PC-9 (cell line): ENCODE measurements at regions of chr17 and their contacts with region 1.

Region 1: DNA sequence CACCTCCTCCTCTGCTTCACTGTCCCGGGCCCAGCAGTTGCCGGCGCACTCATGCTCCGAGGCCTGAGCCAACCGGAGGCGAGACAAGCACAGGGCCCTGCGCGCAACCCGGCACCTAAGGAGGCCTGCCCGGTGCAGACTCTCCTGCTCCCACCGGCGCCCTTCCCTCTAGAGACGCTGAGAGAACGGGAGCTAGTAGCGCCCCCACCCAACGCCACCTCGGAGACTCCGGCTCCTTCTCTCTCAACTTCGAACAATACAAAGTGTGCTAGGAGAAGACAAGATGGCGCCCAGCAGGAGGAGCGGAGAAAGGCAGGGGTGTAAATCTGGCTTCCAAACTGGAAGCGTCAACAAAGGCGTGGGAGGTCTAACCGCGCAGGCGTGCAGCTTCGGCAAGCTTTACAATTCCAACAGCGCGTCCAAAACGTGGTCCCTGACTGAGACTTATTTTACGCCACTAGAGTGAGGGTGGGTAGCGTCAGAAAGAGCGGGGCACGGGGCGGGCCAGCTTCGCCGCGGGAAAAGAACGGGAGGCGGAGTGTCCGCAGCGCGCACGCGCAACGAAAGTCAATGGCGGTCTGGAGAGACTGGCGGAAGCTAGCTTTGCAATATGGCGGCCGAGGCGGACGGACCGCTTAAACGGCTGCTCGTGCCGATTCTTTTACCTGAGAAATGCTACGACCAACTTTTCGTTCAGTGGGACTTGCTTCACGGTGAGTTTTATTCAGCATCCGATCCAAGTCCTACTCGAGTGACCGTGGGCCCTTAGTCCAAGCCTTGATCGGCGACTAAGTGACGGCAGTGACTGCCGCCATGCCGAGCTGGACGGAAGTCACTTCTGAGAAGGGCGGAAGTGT is at the start of gene MPDU1:
- DNase-seq: peak; percentile 72 to 97
- H3K4me3 ChIP-seq: peak within 1 kb of the TSS; percentile 65
- H3K27ac ChIP-seq: peak within 1 kb of the TSS; percentile 87
- H3K4me1 ChIP-seq: peaks cover 41% of the 10 kb centered on the region
- H3K27me3 ChIP-seq: no peaks in the 10 kb centered on the region
- CTCF ChIP-seq: no peak
- total RNA-seq, gene MPDU1: 33.4 and 44.2 TPM in 2 replicates

Region 2: GRCh38 chr17:7572588-7573323 is 10.7 kb before region 1 on chr17:
- CTCF ChIA-PET with region 1: interaction called, 6 read pairs
- POLR2A ChIA-PET with region 1: interaction called, 10 read pairs
- intact Hi-C with region 1: loop called (anchors 2 kb)
- DNase-seq: peak; percentile 96 to 100
- H3K4me3 ChIP-seq: peak overlapping the region; percentile 91
- H3K27ac ChIP-seq: peak overlapping the region; percentile 90
- H3K4me1 ChIP-seq: peaks cover 33% of the 10 kb centered on the region
- H3K27me3 ChIP-seq: no peaks in the 10 kb centered on the region
- CTCF ChIP-seq: no peak

Region 3: DNA sequence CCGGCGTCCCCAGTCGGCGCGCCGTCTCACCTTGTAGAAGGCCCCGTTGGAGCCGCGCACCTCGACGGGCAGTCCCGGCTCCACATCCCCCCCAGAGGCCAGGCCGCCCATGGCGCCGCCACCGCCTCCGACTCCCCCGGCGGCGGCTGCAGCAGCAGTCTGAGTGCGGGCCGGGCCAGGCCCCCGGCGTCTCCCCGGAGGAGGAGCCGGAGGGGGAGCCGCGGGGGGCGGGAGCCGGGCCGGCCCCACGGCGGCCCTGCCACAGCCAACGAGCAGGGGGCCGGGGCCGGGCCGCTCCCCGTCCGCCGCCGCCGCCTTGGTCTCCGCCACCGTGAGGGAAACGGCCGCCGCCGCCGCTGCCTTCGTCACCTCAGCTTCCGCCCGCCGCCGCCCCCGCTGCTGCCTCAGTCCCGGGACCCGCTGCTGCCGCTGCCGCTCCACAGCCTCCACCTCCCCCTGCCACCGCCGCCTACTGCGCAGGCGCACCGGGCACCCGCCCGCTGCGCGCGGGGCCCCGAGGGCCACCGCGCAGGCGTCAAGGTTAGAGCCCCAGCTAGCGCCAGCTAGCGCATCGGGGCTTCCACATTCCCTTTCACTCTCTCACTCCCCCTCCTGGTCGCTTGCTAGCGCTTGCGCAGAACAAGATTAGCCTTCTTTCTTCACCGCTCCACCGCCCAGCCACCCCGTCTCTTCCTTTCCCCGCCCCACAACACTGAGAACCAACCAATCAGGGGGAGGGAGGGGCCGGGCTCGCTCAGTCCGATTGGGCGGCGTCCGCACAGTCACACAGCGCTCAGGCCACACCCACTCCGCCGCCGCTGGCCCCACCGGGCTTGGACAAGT is 31.2 kb after region 1 on chr17 and contains the start of gene FXR2:
- CTCF ChIA-PET with region 1: no interaction called
- POLR2A ChIA-PET with region 1: interaction called, 22 read pairs
- intact Hi-C with region 1: no loop called
- DNase-seq: peak; percentile 94 to 100
- H3K4me3 ChIP-seq: peak within 1 kb of the TSS; percentile 89
- H3K27ac ChIP-seq: peak within 1 kb of the TSS; percentile 73
- H3K4me1 ChIP-seq: peaks cover 22% of the 10 kb centered on the region
- H3K27me3 ChIP-seq: no peaks in the 10 kb centered on the region
- CTCF ChIP-seq: peak; percentile 54; the same call in 1 of the 2 replicates
- total RNA-seq, gene FXR2: 61.5 and 63.7 TPM in 2 replicates

Region 4: GRCh38 chr17:7627250-7628121 is 44.0 kb after region 1 on chr17 and contains the start of gene SAT2:
- CTCF ChIA-PET with region 1: no interaction called
- POLR2A ChIA-PET with region 1: no interaction called
- intact Hi-C with region 1: no loop called
- DNase-seq: peak; percentile 74 to 97
- H3K4me3 ChIP-seq: peak within 1 kb of the TSS; percentile 79
- H3K27ac ChIP-seq: peak within 1 kb of the TSS; percentile 47; the same call in 1 of the 2 replicates
- H3K4me1 ChIP-seq: peaks cover 4% of the 10 kb centered on the region; the same call in 1 of the 2 replicates
- H3K27me3 ChIP-seq: no peaks in the 10 kb centered on the region
- CTCF ChIP-seq: no peak
- total RNA-seq, gene SAT2: 52.0 and 68.7 TPM in 2 replicates

Region 5: GRCh38 chr17:7673239-7673638 is 89.8 kb after region 1 on chr17:
- CTCF ChIA-PET with region 1: no interaction called
- POLR2A ChIA-PET with region 1: no interaction called
- intact Hi-C with region 1: no loop called
- DNase-seq: no peak
- H3K4me3 ChIP-seq: no peak overlapping the region
- H3K27ac ChIP-seq: no peak overlapping the region
- H3K4me1 ChIP-seq: no peaks in the 10 kb centered on the region
- H3K27me3 ChIP-seq: no peaks in the 10 kb centered on the region
- CTCF ChIP-seq: peak; percentile 59

Region 6: GRCh38 chr17:7716901-7717755 is 133.6 kb after region 1 on chr17 and contains the start of gene DNAH2:
- CTCF ChIA-PET with region 1: interaction called, 10 read pairs
- POLR2A ChIA-PET with region 1: no interaction called
- intact Hi-C with region 1: loop called (anchors 1 kb)
- DNase-seq: peak; percentile 71 to 91
- H3K4me3 ChIP-seq: peak within 1 kb of the TSS; percentile 67
- H3K27ac ChIP-seq: no peak within 1 kb of the TSS
- H3K4me1 ChIP-seq: peaks cover 7% of the 10 kb centered on the region
- H3K27me3 ChIP-seq: no peaks in the 10 kb centered on the region
- CTCF ChIP-seq: peak; percentile 50
- total RNA-seq, gene DNAH2: 10.6 and 11.6 TPM in 2 replicates

Region 7: DNA sequence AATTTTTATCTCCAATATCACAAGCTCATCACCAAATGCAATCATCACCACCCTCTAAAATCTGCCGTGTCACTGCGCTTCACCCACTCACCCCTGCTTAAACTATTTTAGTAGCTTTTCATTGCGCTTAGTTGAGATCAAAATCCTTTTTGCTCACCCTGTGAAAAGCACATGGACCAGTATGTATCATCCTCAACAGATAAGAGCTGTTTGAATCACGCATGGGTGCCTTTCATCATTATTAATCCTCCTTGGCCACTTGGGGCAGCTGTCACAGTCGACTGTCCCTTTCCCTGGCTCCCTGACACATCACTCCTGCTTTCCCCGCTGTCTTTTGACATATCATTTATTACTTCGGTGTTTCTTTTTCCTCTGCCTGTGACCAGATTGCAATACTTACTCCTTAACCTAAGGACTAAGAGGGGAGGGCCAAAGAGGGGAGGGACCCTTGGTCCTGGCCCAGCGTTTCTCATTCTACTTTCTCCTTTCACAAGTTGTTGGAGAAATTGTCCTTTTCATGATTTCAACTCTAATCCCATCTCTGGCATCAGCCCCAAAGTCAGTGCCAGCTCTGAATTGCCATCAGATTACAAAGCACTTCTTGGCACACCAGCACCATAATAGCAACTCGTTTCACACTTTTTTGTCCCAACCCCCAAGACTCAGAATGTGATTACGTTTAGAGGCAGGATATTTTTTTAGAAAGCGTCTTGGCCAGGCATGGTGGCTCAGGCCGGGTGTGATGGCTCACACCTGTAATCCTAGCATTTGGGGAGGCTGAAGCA is 241.9 kb after region 1 on chr17:
- CTCF ChIA-PET with region 1: no interaction called
- POLR2A ChIA-PET with region 1: no interaction called
- intact Hi-C with region 1: no loop called
- DNase-seq: no peak
- H3K4me3 ChIP-seq: no peak overlapping the region
- H3K27ac ChIP-seq: no peak overlapping the region
- H3K4me1 ChIP-seq: no peaks in the 10 kb centered on the region
- H3K27me3 ChIP-seq: no peaks in the 10 kb centered on the region
- CTCF ChIP-seq: no peak

Region 8: DNA sequence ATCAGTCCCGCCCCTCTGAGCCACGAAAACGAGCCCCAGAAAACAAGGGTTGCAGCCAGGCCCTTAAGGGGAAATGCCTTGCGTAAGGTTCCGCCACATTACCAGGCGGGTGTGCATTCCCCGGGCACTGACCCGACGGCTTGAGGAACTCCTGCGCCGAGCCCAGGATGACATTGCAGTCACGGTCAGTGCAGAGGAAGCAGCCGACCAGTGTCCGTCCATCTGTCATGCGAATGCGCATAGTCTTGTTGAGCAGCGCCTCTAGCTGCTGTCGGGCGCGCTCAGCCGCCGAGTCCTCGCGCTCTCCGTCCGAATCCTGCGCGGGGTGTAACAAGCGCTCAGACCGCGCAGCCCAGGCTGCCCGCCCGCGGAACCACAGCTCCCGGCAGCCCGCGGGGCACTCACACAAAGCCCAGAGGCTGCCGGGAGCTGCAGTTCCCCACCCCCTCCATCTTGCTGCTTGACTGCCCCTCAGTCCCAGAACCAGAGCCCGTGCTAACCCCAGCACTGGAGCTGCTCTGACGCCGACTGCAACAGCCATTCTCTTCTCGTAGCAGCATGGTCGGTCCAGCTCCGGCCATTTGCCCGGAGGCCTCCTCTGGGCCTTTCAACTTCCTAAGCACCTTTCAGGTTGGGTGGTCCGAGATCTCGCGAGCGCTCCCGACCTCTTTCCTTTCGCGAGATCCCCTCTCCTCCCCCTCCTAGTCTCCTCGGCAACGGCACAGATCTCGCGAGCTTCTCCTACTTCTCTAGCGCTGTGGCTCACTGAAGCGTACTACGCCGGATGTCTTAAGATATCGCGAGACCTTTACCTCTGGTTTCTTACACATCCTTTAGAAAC is 273.6 kb after region 1 on chr17 and contains the start of gene NAA38:
- CTCF ChIA-PET with region 1: no interaction called
- POLR2A ChIA-PET with region 1: interaction called, 5 read pairs
- intact Hi-C with region 1: loop called (anchors 10 kb)
- DNase-seq: peak; percentile 96 to 97
- H3K4me3 ChIP-seq: peak within 1 kb of the TSS; percentile 97
- H3K27ac ChIP-seq: peak within 1 kb of the TSS; percentile 79
- H3K4me1 ChIP-seq: peaks cover 13% of the 10 kb centered on the region
- H3K27me3 ChIP-seq: no peaks in the 10 kb centered on the region
- CTCF ChIP-seq: no peak
- total RNA-seq, gene NAA38: 159 and 176 TPM in 2 replicates

Region 9: GRCh38 chr17:7887482-7888183 is 304.2 kb after region 1 on chr17:
- CTCF ChIA-PET with region 1: no interaction called
- POLR2A ChIA-PET with region 1: no interaction called
- intact Hi-C with region 1: loop called (anchors 10 kb)
- DNase-seq: peak; percentile 88 to 94
- H3K4me3 ChIP-seq: peak overlapping the region; percentile 84
- H3K27ac ChIP-seq: peak overlapping the region; percentile 80
- H3K4me1 ChIP-seq: peaks cover 27% of the 10 kb centered on the region
- H3K27me3 ChIP-seq: no peaks in the 10 kb centered on the region
- CTCF ChIP-seq: no peak

Region 10: DNA sequence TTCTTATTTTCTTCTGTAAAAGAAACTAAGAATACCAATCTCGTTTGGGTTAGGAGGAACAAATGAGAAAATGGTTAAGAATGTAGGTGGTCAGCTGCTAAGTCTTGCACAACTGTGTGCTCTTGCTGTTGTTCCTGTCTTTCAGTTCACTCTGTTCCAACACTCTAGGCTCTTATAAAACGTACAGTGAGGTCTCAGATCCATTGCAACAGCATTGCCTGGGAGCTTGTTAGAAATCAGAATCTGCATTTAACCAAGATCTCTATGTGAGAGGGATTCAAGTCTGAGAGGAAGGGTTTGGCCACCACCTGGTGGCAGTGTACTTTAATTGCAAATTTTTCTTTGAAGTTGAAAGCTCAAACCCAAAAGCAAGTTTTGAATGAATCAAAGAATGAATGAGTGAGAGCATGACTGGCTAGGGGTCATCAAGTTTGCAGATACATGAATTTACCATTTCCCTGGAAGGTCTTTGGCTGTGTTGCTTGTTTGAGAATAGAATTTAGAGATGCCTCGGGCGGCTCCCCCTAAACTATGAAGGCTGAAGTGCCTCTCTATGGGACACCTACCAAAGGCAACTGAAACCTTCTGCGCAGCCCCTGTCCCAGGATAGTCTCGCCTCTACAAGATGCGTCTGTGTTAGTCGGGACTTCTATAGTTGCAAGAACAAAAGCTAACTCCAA is 457.9 kb after region 1 on chr17:
- CTCF ChIA-PET with region 1: no interaction called
- POLR2A ChIA-PET with region 1: interaction called, 10 read pairs
- intact Hi-C with region 1: no loop called
- DNase-seq: peak; percentile 43 to 51
- H3K4me3 ChIP-seq: no peak overlapping the region
- H3K27ac ChIP-seq: no peak overlapping the region
- H3K4me1 ChIP-seq: peaks cover 5% of the 10 kb centered on the region; the same call in 1 of the 2 replicates
- H3K27me3 ChIP-seq: no peaks in the 10 kb centered on the region
- CTCF ChIP-seq: peak; percentile 77